ENCODE measurements at regions of chrX and their contacts with region 1.

Region 1: GRCh38 chrX:40013266-40014195 is 84.2 kb downstream of the BCOR start:
- DNase-seq: peak; percentile 84
- ATAC-seq: peak; percentile 68

Region 2: GRCh38 chrX:39730662-39731397 is 282.7 kb before region 1 on chrX:
- intact Hi-C with region 1: loop called (anchors 10 kb)
- DNase-seq: peak; percentile 70
- ATAC-seq: peak; percentile 82

Region 3: GRCh38 chrX:39907964-39908616 is 105.4 kb before region 1 on chrX:
- intact Hi-C with region 1: loop called (anchors 5 kb)
- DNase-seq: no peak
- ATAC-seq: peak; percentile 87

Region 4: DNA sequence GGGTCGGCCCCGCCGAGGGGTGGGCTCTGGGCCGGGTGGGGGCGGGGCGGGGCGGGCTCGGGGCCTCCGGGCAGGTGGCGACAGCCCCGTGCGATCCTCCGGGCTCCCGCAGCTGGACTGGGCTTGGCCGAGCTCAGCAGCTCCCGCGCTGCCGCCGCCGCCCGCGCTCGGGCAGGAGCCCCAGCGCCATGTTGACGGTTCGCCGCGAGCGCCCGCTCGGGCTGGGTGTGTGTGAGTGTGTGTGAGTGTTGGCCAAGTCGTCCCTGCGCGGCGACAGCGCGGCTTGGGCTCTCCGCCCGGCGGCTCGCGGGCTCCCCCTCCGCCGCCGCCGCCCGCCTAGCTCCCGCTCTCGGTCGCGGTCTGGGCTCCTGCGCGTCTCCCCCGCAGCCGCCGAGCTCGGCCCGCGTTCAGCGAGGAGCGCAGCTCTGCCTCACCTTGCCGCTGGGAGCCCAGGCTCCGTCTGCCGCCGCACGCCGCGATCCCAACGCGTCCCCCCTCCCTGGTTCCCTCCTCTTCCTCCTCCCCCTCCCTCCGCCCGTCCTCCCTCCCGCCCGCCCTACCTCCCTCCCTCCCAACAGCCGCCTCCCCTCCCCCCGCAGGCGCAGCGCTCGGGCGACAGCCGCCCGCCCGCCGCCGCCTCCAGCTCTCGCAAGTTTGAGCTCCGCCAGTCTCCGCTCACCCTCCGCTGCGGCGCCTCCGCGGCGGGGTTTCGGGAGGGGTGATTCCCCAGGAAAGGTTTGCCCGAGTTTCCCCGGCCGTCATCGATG is 84.1 kb after region 1 on chrX and contains the start of gene BCOR:
- intact Hi-C with region 1: loop called (anchors 2 kb)
- DNase-seq: peak; percentile 83
- ATAC-seq: peak; percentile 67
- total RNA-seq, gene BCOR: 16.9 TPM

Region 5: DNA sequence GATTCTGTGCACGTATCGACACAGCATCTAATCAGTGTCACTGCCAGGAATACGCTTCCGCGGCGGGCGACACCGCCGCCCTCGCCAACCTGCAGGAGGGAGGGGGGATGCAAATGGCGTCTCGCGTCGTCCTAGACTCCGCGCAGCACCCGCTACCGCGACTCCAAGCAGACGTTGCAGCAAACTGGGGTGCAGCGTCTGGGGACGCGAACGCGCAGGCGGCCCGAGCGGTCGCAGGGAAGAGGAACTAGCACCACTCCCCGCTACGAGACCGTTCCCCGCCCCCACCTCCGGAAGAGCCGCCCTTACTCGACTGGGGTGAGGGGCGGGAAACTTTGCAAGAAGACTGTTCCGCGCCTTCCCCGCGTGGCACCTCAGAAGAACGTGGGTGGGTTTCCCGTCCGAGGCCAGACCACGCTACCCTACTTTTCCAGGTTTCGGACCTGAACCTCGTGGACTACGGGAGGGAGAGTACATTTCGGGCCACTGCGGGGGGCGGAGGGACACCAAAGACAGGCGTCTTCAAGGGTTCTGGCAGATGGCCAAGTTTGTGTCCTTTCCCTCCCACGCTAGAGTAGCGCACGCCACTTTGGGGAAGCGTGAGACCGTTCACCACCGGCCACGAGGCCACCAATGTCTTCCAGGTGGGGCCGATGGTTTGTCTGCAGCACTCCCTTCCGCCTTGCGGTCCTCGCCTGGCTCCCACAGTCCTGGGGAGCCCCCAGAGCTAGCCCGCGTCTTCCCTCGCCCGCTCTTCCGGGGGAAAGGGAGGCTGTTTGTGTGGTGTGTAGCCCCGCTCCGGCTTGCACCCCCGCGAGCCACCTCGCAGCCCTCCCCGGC is 162.2 kb after region 1 on chrX:
- intact Hi-C with region 1: loop called (anchors 1 kb)
- DNase-seq: peak; percentile 90
- ATAC-seq: peak; percentile 65

Measured in Right ventricle myocardium inferior (tissue), 1 donor.